CD14-positive monocyte (primary cell): ENCODE measurements at regions of chr11 and their contacts with region 1.

Region 1: GRCh38 chr11:131906963-131907362 is 536.5 kb downstream of the NTM start:
- DNase-seq: no peak
- H3K4me3 ChIP-seq: no peak overlapping the region
- H3K4me3 Mint-ChIP-seq: peak overlapping the region in 1 of 2 donors; percentile 13
- H3K27ac ChIP-seq: no peak overlapping the region
- H3K27ac Mint-ChIP-seq: no peak overlapping the region
- H3K4me1 ChIP-seq: no peaks in the 10 kb centered on the region
- H3K4me1 Mint-ChIP-seq: peaks cover 4% of the 10 kb centered on the region
- H3K27me3 ChIP-seq: peaks cover 40 to 50% of the 10 kb centered on the region in 2 donors
- H3K27me3 Mint-ChIP-seq: peaks cover 43 to 68% (median 49%) of the 10 kb centered on the region in 3 donors
- CTCF ChIP-seq: no peak

Region 2: GRCh38 chr11:131748151-131749050 is 158.6 kb before region 1 on chr11:
- intact Hi-C with region 1: loop called in 1 of 2 experiments (anchors 10 kb)
- DNase-seq: peak; percentile 4 to 42 (median 40)
- H3K4me3 ChIP-seq: no peak overlapping the region
- H3K4me3 Mint-ChIP-seq: no peak overlapping the region
- H3K27ac ChIP-seq: no peak overlapping the region
- H3K27ac Mint-ChIP-seq: no peak overlapping the region
- H3K4me1 ChIP-seq: no peaks in the 10 kb centered on the region
- H3K4me1 Mint-ChIP-seq: no peaks in the 10 kb centered on the region
- H3K27me3 ChIP-seq: peaks cover 0 to 2% of the 10 kb centered on the region in 2 donors
- H3K27me3 Mint-ChIP-seq: peaks cover 3 to 13% (median 5%) of the 10 kb centered on the region in 3 donors
- CTCF ChIP-seq: peak; percentile 80

Region 3: GRCh38 chr11:131867457-131868257 is 39.3 kb before region 1 on chr11:
- intact Hi-C with region 1: no loop called
- DNase-seq: peak; percentile 9 to 38 (median 23)
- H3K4me3 ChIP-seq: no peak overlapping the region
- H3K4me3 Mint-ChIP-seq: no peak overlapping the region
- H3K27ac ChIP-seq: no peak overlapping the region
- H3K27ac Mint-ChIP-seq: no peak overlapping the region
- H3K4me1 ChIP-seq: no peaks in the 10 kb centered on the region
- H3K4me1 Mint-ChIP-seq: peaks cover 3% of the 10 kb centered on the region
- H3K27me3 ChIP-seq: no peaks in the 10 kb centered on the region
- H3K27me3 Mint-ChIP-seq: peaks cover 2 to 4% (median 3%) of the 10 kb centered on the region in 3 donors
- CTCF ChIP-seq: peak; percentile 34